ENCODE measurements at regions of chr6 and their contacts with region 1.

Region 1: GRCh38 chr6:154805288-154805911 is 72.2 kb downstream of the SCAF8 start:
- DNase-seq: no peak
- H3K4me3 Mint-ChIP-seq: no peak overlapping the region
- H3K27ac Mint-ChIP-seq: no peak overlapping the region
- H3K4me1 Mint-ChIP-seq: peaks cover 4% of the 10 kb centered on the region
- H3K27me3 Mint-ChIP-seq: no peaks in the 10 kb centered on the region

Region 2: GRCh38 chr6:154773610-154774089 is 31.8 kb before region 1 on chr6:
- intact Hi-C with region 1: loop called (anchors 2 kb)
- DNase-seq: no peak
- H3K4me3 Mint-ChIP-seq: no peak overlapping the region
- H3K27ac Mint-ChIP-seq: peak overlapping the region; percentile 29
- H3K4me1 Mint-ChIP-seq: peaks cover 18% of the 10 kb centered on the region
- H3K27me3 Mint-ChIP-seq: no peaks in the 10 kb centered on the region

Measured in activated CD4-positive, alpha-beta T cell treated with anti-CD3 and anti-CD28 coated beads, Interleukin-2, amount 10 ng/mL, durations not matched to agents 24 days and 14 days (primary cell).